WTC11 (cell line): ENCODE measurements at regions of chr19 and their contacts with region 1.

Region 1: GRCh38 chr19:47713046-47714021 is at the start of gene EHD2:
- DNase-seq: peak; percentile 72
- ATAC-seq: peak; percentile 81
- H3K4me3 Mint-ChIP-seq: peak within 1 kb of the TSS; percentile 66
- H3K27ac Mint-ChIP-seq: no peak within 1 kb of the TSS
- H3K4me1 Mint-ChIP-seq: 0 out of 2 replicates have a peak, but pooled peaks cover 7% of the 10 kb centered on the region
- H3K27me3 Mint-ChIP-seq: peaks cover 22% of the 10 kb centered on the region
- CTCF ChIP-seq: peak; percentile 97
- total RNA-seq, gene EHD2: 11.8 to 15.5 TPM (median 15.4 TPM) in 3 replicates

Region 2: GRCh38 chr19:47447470-47448359 is 265.6 kb before region 1 on chr19:
- CTCF ChIA-PET with region 1: interaction called, 20 read pairs
- POLR2A ChIA-PET with region 1: no interaction called
- DNase-seq: peak; percentile 99
- ATAC-seq: peak; percentile 89
- H3K4me3 Mint-ChIP-seq: peak overlapping the region; percentile 79
- H3K27ac Mint-ChIP-seq: peak overlapping the region; percentile 81
- H3K4me1 Mint-ChIP-seq: peaks cover 36% of the 10 kb centered on the region
- H3K27me3 Mint-ChIP-seq: peaks cover 56% of the 10 kb centered on the region
- CTCF ChIP-seq: no peak

Region 3: GRCh38 chr19:47483800-47484690 is 229.3 kb before region 1 on chr19 and contains the start of gene KPTN:
- CTCF ChIA-PET with region 1: interaction called, 12 read pairs
- POLR2A ChIA-PET with region 1: no interaction called
- DNase-seq: peak; percentile 91
- ATAC-seq: peak; percentile 62
- H3K4me3 Mint-ChIP-seq: peak within 1 kb of the TSS; percentile 96
- H3K27ac Mint-ChIP-seq: peak within 1 kb of the TSS; percentile 98
- H3K4me1 Mint-ChIP-seq: peaks cover 18% of the 10 kb centered on the region
- H3K27me3 Mint-ChIP-seq: peaks cover 9% of the 10 kb centered on the region
- CTCF ChIP-seq: peak; percentile 96
- total RNA-seq, gene KPTN: 24.5 to 30.2 TPM (median 29.5 TPM) in 3 replicates

Region 4: DNA sequence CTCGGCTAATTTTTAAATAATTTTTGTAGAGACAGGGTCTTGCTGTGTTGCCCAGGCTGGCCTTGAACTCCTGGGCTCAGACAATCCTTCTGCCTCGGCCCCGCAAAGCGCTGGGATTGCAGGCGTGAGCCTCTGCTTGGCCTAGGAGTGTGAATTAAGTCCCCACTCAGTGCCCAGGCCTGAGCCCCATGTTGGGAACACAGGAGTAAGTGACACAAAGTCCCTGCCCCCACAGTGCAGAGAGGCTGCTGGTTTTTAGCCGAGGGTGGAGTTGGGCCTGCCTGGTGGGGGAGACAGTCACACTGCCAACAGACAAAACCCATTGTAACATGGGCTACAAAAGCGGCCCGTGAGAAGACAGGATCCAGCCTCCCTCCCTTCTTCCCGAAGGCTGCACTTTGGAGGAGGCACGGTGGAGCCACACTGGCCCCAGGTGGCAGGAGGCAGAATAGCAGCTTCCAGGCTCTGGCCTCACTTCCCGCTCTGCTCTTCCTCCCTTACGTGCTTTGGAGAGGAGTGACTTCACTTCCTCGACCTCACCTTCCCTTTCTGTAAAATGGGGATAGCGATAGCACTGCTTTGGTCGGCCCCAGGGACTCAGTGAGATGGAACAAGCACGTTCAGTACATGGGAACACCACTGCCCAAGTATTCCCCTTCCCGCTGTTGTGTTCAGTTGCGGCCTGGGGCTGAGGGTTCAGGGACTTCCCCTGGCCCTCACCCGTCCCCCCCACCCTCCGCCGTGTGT is 15.3 kb before region 1 on chr19:
- CTCF ChIA-PET with region 1: interaction called, 16 read pairs
- POLR2A ChIA-PET with region 1: no interaction called
- DNase-seq: peak; percentile 86
- ATAC-seq: peak; percentile 84
- H3K4me3 Mint-ChIP-seq: no peak overlapping the region
- H3K27ac Mint-ChIP-seq: peak overlapping the region; percentile 91
- H3K4me1 Mint-ChIP-seq: 0 out of 2 replicates have a peak, but pooled peaks cover 2% of the 10 kb centered on the region
- H3K27me3 Mint-ChIP-seq: no peaks in the 10 kb centered on the region
- CTCF ChIP-seq: peak; percentile 93

Region 5: GRCh38 chr19:47745010-47745901 is 31.9 kb after region 1 on chr19 and contains the start of gene NOP53:
- CTCF ChIA-PET with region 1: interaction called, 102 read pairs
- POLR2A ChIA-PET with region 1: no interaction called
- DNase-seq: peak; percentile 95
- ATAC-seq: peak; percentile 69
- H3K4me3 Mint-ChIP-seq: peak within 1 kb of the TSS; percentile 97
- H3K27ac Mint-ChIP-seq: peak within 1 kb of the TSS; percentile 97
- H3K4me1 Mint-ChIP-seq: peaks cover 13% of the 10 kb centered on the region
- H3K27me3 Mint-ChIP-seq: no peaks in the 10 kb centered on the region; the same call in 1 of the 2 replicates
- CTCF ChIP-seq: no peak
- total RNA-seq, gene NOP53: 289 to 315 TPM (median 310 TPM) in 3 replicates

Region 6: GRCh38 chr19:47790398-47790814 is 77.1 kb after region 1 on chr19:
- CTCF ChIA-PET with region 1: interaction called, 27 read pairs
- POLR2A ChIA-PET with region 1: no interaction called
- DNase-seq: peak; percentile 100
- ATAC-seq: peak; percentile 91
- H3K4me3 Mint-ChIP-seq: peak overlapping the region; percentile 25; the same call in 1 of the 2 replicates
- H3K27ac Mint-ChIP-seq: peak overlapping the region; percentile 57; the same call in 1 of the 2 replicates
- H3K4me1 Mint-ChIP-seq: peaks cover 10% of the 10 kb centered on the region
- H3K27me3 Mint-ChIP-seq: no peaks in the 10 kb centered on the region
- CTCF ChIP-seq: peak; percentile 85